ENCODE measurements at regions of chr3 and their contacts with region 1.

Region 1: DNA sequence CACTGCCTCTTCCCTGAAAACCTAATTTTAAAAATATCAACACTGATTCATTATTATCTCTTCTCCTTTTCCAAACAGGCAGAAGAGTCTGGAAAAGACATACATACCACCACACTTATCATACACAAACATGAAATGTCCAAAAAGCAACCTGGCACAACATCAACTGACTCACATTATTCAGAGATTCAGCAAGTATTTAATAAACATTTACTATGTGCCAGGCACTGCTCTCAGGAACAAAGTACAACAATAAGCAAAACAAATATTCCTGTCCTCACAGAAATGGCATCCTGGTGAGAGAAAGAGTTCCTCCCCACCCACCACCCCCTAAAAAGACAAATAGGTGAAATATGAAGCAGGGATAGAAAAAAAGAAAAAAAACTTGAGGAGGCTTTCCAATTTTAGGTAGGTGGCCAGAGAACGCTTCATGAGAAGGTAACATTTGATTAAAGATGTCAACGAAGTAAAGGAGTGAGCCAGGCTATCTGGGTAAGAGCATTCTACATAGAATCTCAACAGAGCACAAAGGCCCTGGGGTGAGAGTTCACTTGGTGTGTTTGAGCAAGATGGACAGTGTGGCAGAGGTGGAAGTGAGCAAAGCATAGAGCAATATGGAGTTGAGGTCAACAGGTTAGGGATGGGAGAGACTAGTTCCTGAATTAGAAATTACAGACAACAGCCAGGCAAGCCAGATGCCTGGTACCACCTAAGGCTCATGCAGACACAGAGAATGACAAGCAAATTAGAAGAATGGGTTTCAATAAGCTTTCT is 141.7 kb downstream of the OSBPL10 start:
- DNase-seq: no peak
- H3K4me3 ChIP-seq: no peak overlapping the region
- CTCF ChIP-seq: no peak
- POLR2A ChIP-seq: no peak

Region 2: DNA sequence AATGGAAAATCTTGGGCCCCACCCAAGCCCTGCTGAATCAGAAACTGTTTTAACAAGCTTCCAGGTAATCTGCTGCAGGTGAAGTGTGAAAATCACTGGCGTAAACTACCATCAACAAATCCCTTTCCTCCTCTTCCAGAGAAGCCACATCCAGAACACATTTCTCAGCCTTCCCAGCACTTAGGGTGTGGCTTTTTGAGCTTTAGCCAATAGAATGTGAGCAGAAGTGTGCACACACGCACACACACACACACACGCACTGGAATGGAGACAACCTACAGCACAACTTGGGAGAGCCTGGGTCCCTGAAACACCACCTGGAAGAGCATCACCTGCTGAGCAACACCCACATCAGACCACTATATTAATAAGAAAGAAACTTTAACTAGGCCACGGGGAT is 43.1 kb after region 1 on chr3:
- intact Hi-C with region 1: loop called (anchors 2 kb)
- DNase-seq: no peak
- H3K4me3 ChIP-seq: no peak overlapping the region
- CTCF ChIP-seq: no peak
- POLR2A ChIP-seq: no peak